HepG2 (cell line): ENCODE measurements at regions of chr1 and their contacts with region 1.

Region 1: DNA sequence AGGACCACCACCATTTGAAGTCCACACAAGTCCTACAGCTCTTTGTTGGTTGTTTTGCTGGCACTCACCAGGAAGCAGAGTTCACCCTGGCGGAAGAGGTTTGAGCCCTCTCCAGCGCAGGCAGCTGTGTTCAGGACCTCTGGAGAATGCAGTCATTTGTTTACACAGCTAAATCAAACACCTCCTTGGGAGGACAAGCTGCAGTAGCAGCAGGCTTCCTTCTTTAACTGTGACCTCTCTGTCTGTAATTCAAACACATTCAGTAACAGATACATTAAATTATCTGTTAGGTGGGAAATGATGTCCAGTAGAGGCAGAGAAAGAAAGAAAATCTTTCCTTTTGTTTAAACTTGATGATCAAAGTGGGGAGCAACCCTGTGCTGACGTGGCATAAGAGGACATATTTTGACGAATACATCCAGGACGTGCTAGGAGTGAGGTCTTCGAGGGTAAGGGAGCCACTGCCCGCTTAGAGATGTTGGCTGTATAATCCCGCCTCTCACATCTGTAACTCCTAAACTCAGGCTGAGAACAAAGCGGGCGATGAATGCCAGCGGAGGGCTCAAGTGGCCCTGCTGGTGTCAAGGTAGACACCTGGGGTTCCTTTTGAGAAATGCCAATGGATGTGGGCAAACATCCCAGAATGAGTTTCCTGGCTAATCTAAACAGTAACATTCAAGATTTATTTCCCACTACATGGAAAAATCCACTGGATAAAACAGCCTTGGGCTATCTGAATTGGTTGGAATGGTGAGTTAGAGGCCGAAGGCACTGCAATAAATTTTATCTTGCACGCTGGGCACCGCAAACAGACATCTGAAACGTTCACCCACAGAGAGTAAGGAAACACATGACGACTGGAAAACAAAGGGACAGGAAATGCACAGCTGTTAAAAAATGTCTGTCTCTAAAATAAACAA is 51.7 kb downstream of the ABCA4 start:
- DNase-seq: peak; percentile 87
- ATAC-seq: peak; percentile 93
- H3K4me3 ChIP-seq: peak overlapping the region in 2 of 3 experiments; percentile 19 to 50; a peak in 4 of 6 replicates
- H3K27ac ChIP-seq: peak overlapping the region; percentile 77
- H3K4me1 ChIP-seq: peaks cover 37% of the 10 kb centered on the region
- H3K27me3 ChIP-seq: no peaks in the 10 kb centered on the region
- CTCF ChIP-seq: no peak
- EP300 ChIP-seq: peak in 1 of 2 experiments; percentile 63; a peak in 2 of 4 replicates
- POLR2A ChIP-seq: no peak; a peak in 1 of 4 replicates
- RAD21 ChIP-seq: no peak

Region 2: DNA sequence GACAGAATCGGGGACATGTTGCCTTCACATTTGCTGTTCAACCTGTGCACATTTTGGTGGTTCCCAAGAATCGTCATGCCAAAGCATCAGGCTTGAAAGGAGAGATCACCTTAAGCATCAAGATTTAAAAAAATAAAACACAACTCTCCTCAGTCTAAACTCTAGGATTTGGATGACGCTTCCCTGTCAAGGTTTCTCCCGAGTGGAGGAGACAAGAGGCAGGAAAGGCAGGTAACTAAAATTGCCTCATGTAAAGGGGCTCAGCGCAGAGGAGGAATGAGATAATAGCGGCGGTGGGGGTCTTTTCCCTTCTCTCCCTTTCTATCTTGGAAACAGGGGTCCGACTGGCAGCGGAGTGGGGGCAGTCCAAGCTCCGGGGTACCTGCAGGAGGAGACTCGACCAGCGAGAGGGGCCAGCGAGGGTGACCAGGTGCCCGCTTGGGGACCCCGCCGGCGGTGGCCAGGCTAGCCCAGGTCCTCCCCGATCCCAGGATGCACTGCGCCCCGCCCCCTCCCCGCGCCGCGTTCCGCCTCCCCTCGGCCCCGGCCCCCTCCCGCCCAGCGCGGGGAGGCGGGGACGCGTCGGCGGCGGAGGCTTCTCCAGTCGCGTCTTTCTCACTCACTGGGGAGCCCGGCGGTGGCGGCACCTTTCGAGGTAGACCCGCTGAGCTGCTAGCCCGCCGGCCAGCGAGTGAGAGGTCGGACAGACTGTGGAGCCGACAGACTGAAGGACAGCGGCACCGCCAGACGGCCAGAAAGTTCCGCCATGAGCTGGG is 621.6 kb before region 1 on chr1 and contains the start of gene FNBP1L:
- CTCF ChIA-PET with region 1: no interaction called
- POLR2A ChIA-PET with region 1: no interaction called
- in situ Hi-C with region 1: no loop called
- intact Hi-C with region 1: no loop called
- DNase-seq: peak; percentile 65
- ATAC-seq: peak; percentile 90
- H3K4me3 ChIP-seq: peak within 1 kb of the TSS; percentile 87 to 99 (median 99)
- H3K27ac ChIP-seq: peak within 1 kb of the TSS; percentile 90
- H3K4me1 ChIP-seq: peaks cover 31% of the 10 kb centered on the region
- H3K27me3 ChIP-seq: no peaks in the 10 kb centered on the region; a peak in 1 of 5 replicates
- CTCF ChIP-seq: no peak
- EP300 ChIP-seq: no peak
- POLR2A ChIP-seq: peak; percentile 72 to 85
- RAD21 ChIP-seq: no peak
- total RNA-seq, gene FNBP1L: 27.1 and 41.3 TPM in 2 replicates

Region 3: DNA sequence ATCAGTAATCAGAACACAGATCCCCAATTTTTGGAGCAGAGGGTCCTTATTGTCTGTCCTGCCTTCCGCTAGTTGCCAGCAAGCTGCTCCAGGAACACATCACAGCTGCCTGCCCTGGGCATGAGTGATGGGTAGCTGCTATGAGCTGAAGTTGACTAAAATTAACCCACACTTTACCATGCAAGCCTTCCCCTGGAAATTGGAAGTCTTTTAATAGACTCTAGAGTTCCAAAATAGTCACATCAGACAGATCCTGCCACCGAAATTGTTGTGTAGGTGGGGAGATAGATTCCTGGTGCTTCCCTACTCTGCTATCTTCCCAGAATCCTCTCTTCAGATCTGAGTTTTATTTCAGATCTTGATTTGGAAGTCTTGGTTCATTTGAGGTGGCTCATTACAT is 96.9 kb before region 1 on chr1:
- CTCF ChIA-PET with region 1: no interaction called
- POLR2A ChIA-PET with region 1: no interaction called
- in situ Hi-C with region 1: no loop called
- intact Hi-C with region 1: no loop called
- DNase-seq: no peak
- ATAC-seq: no peak
- H3K4me3 ChIP-seq: no peak overlapping the region
- H3K27ac ChIP-seq: no peak overlapping the region
- H3K4me1 ChIP-seq: peaks cover 16% of the 10 kb centered on the region
- H3K27me3 ChIP-seq: no peaks in the 10 kb centered on the region
- CTCF ChIP-seq: no peak
- EP300 ChIP-seq: no peak
- POLR2A ChIP-seq: no peak
- RAD21 ChIP-seq: no peak

Region 4: DNA sequence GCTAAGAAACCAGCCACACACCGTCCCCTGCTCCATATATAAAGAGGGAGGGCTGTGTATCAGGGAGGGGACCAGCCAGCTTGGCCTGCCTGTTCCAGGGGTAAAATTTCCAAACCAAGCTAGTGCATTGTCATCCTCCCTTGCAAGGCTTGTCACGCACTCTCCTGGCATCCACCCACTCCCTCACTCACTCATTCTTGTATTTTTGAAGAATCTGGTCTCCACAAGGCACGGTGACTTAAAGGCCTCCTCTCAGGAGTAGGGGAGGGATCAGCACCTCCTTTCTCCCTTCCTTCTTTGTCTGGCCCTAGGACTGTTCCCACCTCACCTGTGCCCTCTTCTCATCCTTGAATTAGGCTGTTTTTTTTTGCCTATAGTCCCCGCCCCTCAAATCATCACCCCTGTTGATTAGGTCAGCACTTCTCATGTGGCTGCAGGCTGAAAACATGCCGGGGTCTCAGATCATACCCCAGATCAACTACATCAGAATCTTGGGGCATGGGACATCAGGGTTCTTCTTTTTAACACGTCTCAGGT is 46.7 kb after region 1 on chr1:
- CTCF ChIA-PET with region 1: no interaction called
- POLR2A ChIA-PET with region 1: interaction called, 12 read pairs
- in situ Hi-C with region 1: no loop called
- intact Hi-C with region 1: loop called (anchors 5 kb)
- DNase-seq: no peak
- ATAC-seq: peak; percentile 37
- H3K4me3 ChIP-seq: peak overlapping the region in 1 of 3 experiments; percentile 25; a peak in 1 of 6 replicates
- H3K27ac ChIP-seq: peak overlapping the region; percentile 65
- H3K4me1 ChIP-seq: peaks cover 91% of the 10 kb centered on the region
- H3K27me3 ChIP-seq: peaks cover 2 to 12% of the 10 kb centered on the region in 2 experiments; a peak in 2 of 5 replicates
- CTCF ChIP-seq: no peak
- EP300 ChIP-seq: no peak
- POLR2A ChIP-seq: no peak
- RAD21 ChIP-seq: no peak

Region 5: GRCh38 chr1:94125551-94126514 is 56.6 kb after region 1 on chr1:
- CTCF ChIA-PET with region 1: no interaction called
- POLR2A ChIA-PET with region 1: interaction called, 17 read pairs
- in situ Hi-C with region 1: no loop called
- intact Hi-C with region 1: loop called (anchors 2 kb)
- DNase-seq: peak; percentile 96
- ATAC-seq: peak; percentile 97
- H3K4me3 ChIP-seq: peak overlapping the region; percentile 23 to 40 (median 25); a peak in 5 of 6 replicates
- H3K27ac ChIP-seq: peak overlapping the region; percentile 78
- H3K4me1 ChIP-seq: peaks cover 54% of the 10 kb centered on the region
- H3K27me3 ChIP-seq: no peaks in the 10 kb centered on the region
- CTCF ChIP-seq: peak; percentile 31; the same call in 1 of the 2 replicates
- EP300 ChIP-seq: peak in 1 of 2 experiments; percentile 90; a peak in 3 of 4 replicates
- POLR2A ChIP-seq: peak; percentile 30 to 48; a peak in 2 of 4 replicates
- RAD21 ChIP-seq: no peak